Activated T-helper 2 cell treated with anti-CD3 and anti-CD28 coated beads, Interferon-gamma antibody, Interleukin-2, Interleukin-4, amounts not matched to agents 10 μg/mL and 5 μg/mL and 100 μg/mL, durations not matched to agents 14 hours and 24 hours and 36 hours (primary cell): ENCODE measurements at regions of chr12 and their contacts with region 1.

Region 1: GRCh38 chr12:58413794-58414193 is 472.4 kb downstream of the ATP23 start:
- DNase-seq: no peak
- H3K4me3 Mint-ChIP-seq: no peak overlapping the region
- H3K27ac Mint-ChIP-seq: no peak overlapping the region
- H3K4me1 Mint-ChIP-seq: peaks cover 7% of the 10 kb centered on the region
- H3K27me3 Mint-ChIP-seq: peaks cover 18% of the 10 kb centered on the region

Region 2: GRCh38 chr12:58425481-58426392 is 11.9 kb after region 1 on chr12:
- intact Hi-C with region 1: loop called (anchors 1 kb)
- DNase-seq: peak; percentile 11
- H3K4me3 Mint-ChIP-seq: peak overlapping the region; percentile 9
- H3K27ac Mint-ChIP-seq: peak overlapping the region; percentile 87
- H3K4me1 Mint-ChIP-seq: peaks cover 39% of the 10 kb centered on the region
- H3K27me3 Mint-ChIP-seq: peaks cover 32% of the 10 kb centered on the region

Region 3: DNA sequence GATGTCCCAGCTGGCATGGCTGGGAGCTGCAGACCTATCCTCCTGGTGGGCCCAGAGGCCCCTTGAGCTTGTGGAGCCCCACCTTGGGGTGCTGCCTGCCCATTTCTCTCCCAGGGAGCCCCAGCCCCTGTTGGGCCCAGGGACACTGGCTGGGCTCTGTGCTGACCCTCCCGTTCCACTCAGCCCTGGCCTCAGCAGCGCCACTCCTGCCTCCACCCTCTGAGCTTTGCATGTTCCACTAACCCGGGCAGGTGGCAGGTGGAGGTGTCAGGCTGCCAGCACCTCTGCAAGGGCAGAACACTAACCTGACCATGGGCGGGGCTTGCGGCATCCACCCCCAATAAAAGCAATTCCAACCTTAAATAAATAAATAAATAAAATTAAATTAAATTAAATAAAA is 207.3 kb after region 1 on chr12:
- intact Hi-C with region 1: no loop called
- DNase-seq: no peak
- H3K4me3 Mint-ChIP-seq: no peak overlapping the region
- H3K27ac Mint-ChIP-seq: no peak overlapping the region
- H3K4me1 Mint-ChIP-seq: no peaks in the 10 kb centered on the region
- H3K27me3 Mint-ChIP-seq: peaks cover 4% of the 10 kb centered on the region